ENCODE measurements at regions of chr1 and their contacts with region 1.

Region 1: DNA sequence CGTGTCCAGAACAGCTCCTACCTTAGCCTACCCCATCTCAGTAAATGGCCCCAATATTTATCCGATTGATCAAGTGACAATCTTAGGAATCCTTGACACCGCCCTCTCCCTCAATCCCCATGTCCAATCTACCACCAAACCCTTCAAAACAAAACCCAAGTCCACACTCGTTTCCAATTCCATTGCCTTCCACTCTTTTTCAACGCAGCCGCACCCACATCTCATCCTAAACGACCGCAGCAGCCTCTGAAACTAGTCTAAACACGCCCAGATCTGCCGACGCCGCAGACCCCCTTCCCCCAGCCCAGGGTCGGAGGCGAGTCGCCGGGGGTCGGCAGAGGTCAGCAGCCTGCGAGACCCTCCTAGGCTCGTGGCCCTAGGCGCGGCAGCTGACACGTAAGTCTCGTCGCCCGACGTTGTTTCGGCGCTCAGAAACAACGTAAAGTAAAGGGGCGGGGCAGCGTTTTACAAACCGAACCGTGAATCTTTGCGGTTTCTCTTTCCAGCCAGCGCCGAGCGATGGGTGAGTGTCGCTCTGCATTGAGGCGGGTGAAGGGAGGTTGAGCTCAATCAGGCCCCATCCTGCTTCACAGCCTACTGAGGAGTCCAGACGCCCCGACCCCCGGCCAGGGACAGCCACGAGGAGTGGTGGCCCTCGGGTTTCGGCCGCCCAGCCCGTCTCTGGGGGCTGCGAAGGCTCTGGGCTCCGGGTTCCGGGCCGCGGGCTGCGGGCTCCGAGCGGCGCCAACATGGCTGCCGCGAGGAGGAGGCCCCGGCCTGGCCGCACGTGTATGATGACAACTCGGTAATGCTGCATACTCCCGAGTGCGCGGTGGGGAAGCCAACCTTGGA is at the start of gene RPS8:
- DNase-seq: peak; percentile 77 to 92 (median 90)
- ATAC-seq: peak; percentile 91
- H3K4me3 ChIP-seq: peak within 1 kb of the TSS; percentile 99
- H3K4me3 Mint-ChIP-seq: peak within 1 kb of the TSS; percentile 88 to 99 (median 92)
- H3K27ac ChIP-seq: peak within 1 kb of the TSS; percentile 89
- H3K27ac Mint-ChIP-seq: peak within 1 kb of the TSS; percentile 91 to 98 (median 94)
- H3K4me1 ChIP-seq: peaks cover 6 to 19% of the 10 kb centered on the region in 2 donors
- H3K4me1 Mint-ChIP-seq: peaks cover 20 to 45% (median 38%) of the 10 kb centered on the region in 7 donors
- H3K27me3 ChIP-seq: no peaks in the 10 kb centered on the region
- H3K27me3 Mint-ChIP-seq: no peaks in the 10 kb centered on the region
- total RNA-seq, gene RPS8: 2,000 to 3,409 (median 3,025) TPM

Region 2: GRCh38 chr1:44674113-44675000 is 100.9 kb before region 1 on chr1 and contains the starts of genes ARMH1 and TMEM53:
- CTCF ChIA-PET with region 1: no interaction called
- POLR2A ChIA-PET with region 1: interaction called, 4 read pairs
- intact Hi-C with region 1: loop called in 1 of 2 experiments (anchors 1 kb)
- DNase-seq: peak; percentile 91 to 96 (median 95)
- ATAC-seq: peak; percentile 94
- H3K4me3 ChIP-seq: peak within 1 kb of the TSS; percentile 81
- H3K4me3 Mint-ChIP-seq: peak within 1 kb of the TSS; percentile 83 to 94 (median 91)
- H3K27ac ChIP-seq: peak within 1 kb of the TSS; percentile 76
- H3K27ac Mint-ChIP-seq: peak within 1 kb of the TSS; percentile 84 to 94 (median 91)
- H3K4me1 ChIP-seq: peaks cover 0 to 6% of the 10 kb centered on the region in 2 donors
- H3K4me1 Mint-ChIP-seq: peaks cover 13 to 34% (median 23%) of the 10 kb centered on the region in 7 donors
- H3K27me3 ChIP-seq: no peaks in the 10 kb centered on the region
- H3K27me3 Mint-ChIP-seq: no peaks in the 10 kb centered on the region
- total RNA-seq, gene ARMH1: 65.8 to 205 (median 87.0) TPM
- total RNA-seq, gene TMEM53: 1.6 to 3.5 (median 1.9) TPM

Region 3: GRCh38 chr1:44730741-44731512 is 44.4 kb before region 1 on chr1 and contains the start of gene RNU5D-1:
- CTCF ChIA-PET with region 1: interaction called, 5 read pairs
- POLR2A ChIA-PET with region 1: interaction called, 63 read pairs
- intact Hi-C with region 1: loop called (anchors 1 kb)
- DNase-seq: peak; percentile 77 to 92 (median 89)
- ATAC-seq: peak; percentile 85
- H3K4me3 ChIP-seq: peak within 1 kb of the TSS; percentile 18
- H3K4me3 Mint-ChIP-seq: peak within 1 kb of the TSS; percentile 54 to 93 (median 84)
- H3K27ac ChIP-seq: peak within 1 kb of the TSS; percentile 86
- H3K27ac Mint-ChIP-seq: peak within 1 kb of the TSS; percentile 97 to 100 (median 98)
- H3K4me1 ChIP-seq: peaks cover 10 to 13% of the 10 kb centered on the region in 2 donors
- H3K4me1 Mint-ChIP-seq: peaks cover 14 to 58% (median 43%) of the 10 kb centered on the region in 7 donors
- H3K27me3 ChIP-seq: no peaks in the 10 kb centered on the region
- H3K27me3 Mint-ChIP-seq: no peaks in the 10 kb centered on the region
- total RNA-seq, gene RNU5D-1: not detected

Region 4: DNA sequence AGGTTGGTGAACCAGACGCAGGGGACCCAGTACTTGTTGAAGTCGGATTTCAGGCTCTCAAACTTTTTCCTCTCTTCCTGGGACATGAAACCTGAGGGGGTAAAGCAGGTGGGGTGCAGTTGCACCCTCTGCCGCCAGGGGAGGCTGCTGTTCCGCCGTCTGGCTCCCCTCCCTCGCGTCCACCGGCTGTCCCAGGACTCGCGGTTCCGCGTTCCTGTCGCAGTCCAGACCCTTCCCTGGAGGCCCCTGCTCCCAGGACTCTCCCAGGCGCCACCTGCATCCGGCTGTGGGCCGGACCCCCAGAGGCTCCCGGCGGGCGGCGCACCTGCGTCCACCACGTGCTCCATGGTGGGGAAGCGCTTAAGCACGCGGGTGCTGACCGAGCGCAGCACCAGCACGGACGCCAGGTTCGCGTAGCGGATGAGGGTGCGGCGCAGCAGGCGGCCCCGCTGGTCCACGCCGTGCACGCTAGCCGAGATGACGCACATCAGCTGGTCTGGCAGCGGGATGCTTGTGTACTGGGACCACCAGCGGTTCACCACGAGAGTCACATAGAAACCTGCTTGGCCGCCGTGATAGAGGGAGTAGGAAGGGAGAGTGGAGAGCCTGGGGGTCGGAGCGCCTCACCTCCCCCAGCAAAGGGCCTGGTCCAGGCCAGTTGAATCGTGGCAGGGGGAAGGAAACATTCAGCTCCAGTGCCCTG is 11.0 kb after region 1 on chr1:
- CTCF ChIA-PET with region 1: interaction called, 6 read pairs
- POLR2A ChIA-PET with region 1: interaction called, 93 read pairs
- intact Hi-C with region 1: loop called (anchors 1 kb)
- DNase-seq: peak; percentile 69 to 85 (median 76)
- ATAC-seq: peak; percentile 90
- H3K4me3 ChIP-seq: peak overlapping the region; percentile 64
- H3K4me3 Mint-ChIP-seq: peak overlapping the region; percentile 60 to 82 (median 75)
- H3K27ac ChIP-seq: peak overlapping the region; percentile 58
- H3K27ac Mint-ChIP-seq: peak overlapping the region in 8 of 9 donors; percentile 51 to 80 (median 72)
- H3K4me1 ChIP-seq: peaks cover 20 to 25% of the 10 kb centered on the region in 2 donors
- H3K4me1 Mint-ChIP-seq: peaks cover 13 to 35% (median 27%) of the 10 kb centered on the region in 7 donors
- H3K27me3 ChIP-seq: no peaks in the 10 kb centered on the region
- H3K27me3 Mint-ChIP-seq: no peaks in the 10 kb centered on the region

Region 5: DNA sequence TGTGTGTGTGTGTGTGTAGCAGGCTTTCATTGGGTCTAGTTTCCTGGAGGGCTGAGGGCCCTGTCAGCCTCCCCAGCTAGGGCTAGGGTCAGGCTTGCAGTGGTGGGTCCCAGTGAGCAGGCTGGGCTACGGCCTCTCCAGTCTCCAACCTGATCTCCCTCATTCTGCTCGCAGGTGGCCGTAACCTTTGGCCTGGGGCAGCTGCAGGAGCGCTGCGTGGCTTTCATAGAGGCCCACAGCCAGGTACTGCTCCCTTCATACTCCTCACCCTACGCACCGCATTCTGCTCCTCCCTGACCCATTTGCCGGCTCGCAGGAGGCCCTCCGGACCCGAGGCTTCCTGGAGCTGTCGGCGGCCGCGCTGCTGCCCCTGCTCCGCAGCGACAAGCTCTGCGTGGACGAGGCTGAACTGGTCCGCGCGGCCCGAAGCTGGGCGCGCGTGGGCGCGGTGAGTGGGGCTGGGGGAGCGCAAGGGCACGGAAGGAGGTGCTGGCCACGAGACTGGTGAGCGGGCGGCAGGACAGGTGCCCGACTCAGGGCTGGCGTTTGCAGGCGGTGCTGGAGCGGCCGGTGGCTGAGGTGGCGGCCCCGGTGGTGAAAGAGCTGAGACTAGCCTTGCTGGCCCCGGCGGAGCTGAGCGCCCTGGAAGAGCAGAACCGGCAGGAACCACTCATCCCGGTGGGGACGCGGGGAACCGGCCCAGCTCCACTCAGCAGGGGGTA is 37.7 kb after region 1 on chr1:
- CTCF ChIA-PET with region 1: interaction called, 3 read pairs
- POLR2A ChIA-PET with region 1: interaction called, 59 read pairs
- intact Hi-C with region 1: no loop called
- DNase-seq: no peak
- ATAC-seq: no peak
- H3K4me3 ChIP-seq: peak overlapping the region; percentile 66
- H3K4me3 Mint-ChIP-seq: peak overlapping the region in 9 of 10 donors; percentile 45 to 94 (median 89)
- H3K27ac ChIP-seq: peak overlapping the region; percentile 81
- H3K27ac Mint-ChIP-seq: peak overlapping the region in 8 of 9 donors; percentile 95 to 100 (median 99)
- H3K4me1 ChIP-seq: peaks cover 45 to 56% of the 10 kb centered on the region in 2 donors
- H3K4me1 Mint-ChIP-seq: peaks cover 52 to 77% (median 63%) of the 10 kb centered on the region in 7 donors
- H3K27me3 ChIP-seq: no peaks in the 10 kb centered on the region
- H3K27me3 Mint-ChIP-seq: peaks cover 0 to 3% (median 0%) of the 10 kb centered on the region in 5 donors

Region 6: GRCh38 chr1:45339789-45340570 is 564.7 kb after region 1 on chr1 and contains the starts of genes MUTYH and TOE1:
- CTCF ChIA-PET with region 1: no interaction called
- POLR2A ChIA-PET with region 1: interaction called, 12 read pairs
- intact Hi-C with region 1: no loop called
- DNase-seq: peak; percentile 84 to 95 (median 89)
- ATAC-seq: peak; percentile 91
- H3K4me3 ChIP-seq: peak within 1 kb of the TSS; percentile 83
- H3K4me3 Mint-ChIP-seq: peak within 1 kb of the TSS; percentile 95 to 100 (median 99)
- H3K27ac ChIP-seq: peak within 1 kb of the TSS; percentile 99
- H3K27ac Mint-ChIP-seq: peak within 1 kb of the TSS; percentile 96 to 99 (median 99)
- H3K4me1 ChIP-seq: peaks cover 31 to 33% of the 10 kb centered on the region in 2 donors
- H3K4me1 Mint-ChIP-seq: peaks cover 24 to 75% (median 61%) of the 10 kb centered on the region in 7 donors
- H3K27me3 ChIP-seq: no peaks in the 10 kb centered on the region
- H3K27me3 Mint-ChIP-seq: no peaks in the 10 kb centered on the region
- total RNA-seq, gene MUTYH: 56.7 to 85.4 (median 67.7) TPM
- total RNA-seq, gene TOE1: 20.6 to 53.3 (median 25.7) TPM

Measured in naive thymus-derived CD4-positive, alpha-beta T cell (primary cell).